Posterior cingulate gyrus (tissue), 11 donors: ENCODE measurements at regions of chr12 and their contacts with region 1.

Region 1: GRCh38 chr12:121443193-121443870 is 43.4 kb downstream of the RNF34 start:
- DNase-seq: peak; percentile 78 to 98 (median 91)

Region 2: GRCh38 chr12:121334513-121335343 is 108.6 kb before region 1 on chr12:
- intact Hi-C with region 1: loop called (anchors 2 kb)
- DNase-seq: peak in 1 of 10 donors; percentile 13

Region 3: GRCh38 chr12:121345151-121345815 is 98.0 kb before region 1 on chr12:
- intact Hi-C with region 1: loop called (anchors 5 kb)
- DNase-seq: peak in 2 of 10 donors; percentile 26 to 67

Region 4: GRCh38 chr12:121399391-121400331 is 43.7 kb before region 1 on chr12 and contains the start of gene RNF34:
- intact Hi-C with region 1: loop called (anchors 2 kb)
- DNase-seq: peak; percentile 95 to 100 (median 98)